Activated B cell treated with CpG ODN at 0.5 μM for 24 hours (primary cell): ENCODE measurements at regions of chr2 and their contacts with region 1.

Region 1: DNA sequence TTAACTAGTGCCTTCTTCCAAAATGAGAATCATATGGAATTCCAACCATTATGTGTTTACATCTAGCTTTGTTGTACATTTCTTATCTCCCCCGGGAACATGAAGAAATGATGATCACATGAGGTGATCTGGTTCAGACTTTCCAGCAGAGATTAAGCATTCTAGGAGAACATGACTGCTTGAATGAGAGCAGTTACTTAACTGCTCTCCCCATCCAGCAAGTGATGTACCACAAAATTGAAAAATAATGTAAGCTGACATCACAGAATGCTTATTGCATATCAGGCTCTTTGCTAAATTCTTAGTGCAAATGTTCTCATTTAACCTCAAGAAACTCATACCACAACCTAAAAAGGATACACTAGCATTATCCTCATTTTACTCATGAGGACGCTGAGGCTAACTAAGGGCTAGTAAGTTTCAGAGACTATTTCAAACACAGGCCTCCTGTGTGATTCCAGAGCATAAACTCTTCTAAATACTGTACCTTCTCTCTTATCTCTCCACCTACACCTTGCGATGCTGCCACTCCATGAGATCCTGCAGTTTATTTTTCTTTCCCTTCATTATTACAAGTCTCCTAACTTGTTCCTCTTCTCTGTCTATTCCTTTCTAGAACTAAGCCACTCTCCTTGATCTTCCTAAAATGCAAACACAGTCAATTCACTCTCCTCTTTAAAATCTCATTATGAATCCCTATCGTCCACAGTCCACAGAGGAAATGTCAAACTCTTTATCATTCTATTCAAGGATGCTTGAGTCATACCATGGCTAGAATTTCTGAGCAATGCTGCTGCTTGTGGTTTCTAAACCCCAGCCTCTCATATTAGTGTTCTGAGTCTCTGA is 1224.8 kb upstream of the ZEB2 start:
- DNase-seq: no peak
- ATAC-seq: peak; percentile 49
- H3K4me3 Mint-ChIP-seq: peak overlapping the region; percentile 50
- H3K27ac Mint-ChIP-seq: peak overlapping the region; percentile 84
- H3K4me1 Mint-ChIP-seq: peaks cover 88% of the 10 kb centered on the region
- H3K27me3 Mint-ChIP-seq: no peaks in the 10 kb centered on the region
- CTCF ChIP-seq: no peak

Region 2: GRCh38 chr2:145411493-145411892 is 333.3 kb before region 1 on chr2:
- CTCF ChIA-PET with region 1: no interaction called
- POLR2A ChIA-PET with region 1: no interaction called
- intact Hi-C with region 1: loop called (anchors 2 kb)
- DNase-seq: no peak
- ATAC-seq: peak; percentile 82
- H3K4me3 Mint-ChIP-seq: peak overlapping the region; percentile 74
- H3K27ac Mint-ChIP-seq: peak overlapping the region; percentile 65
- H3K4me1 Mint-ChIP-seq: peaks cover 35% of the 10 kb centered on the region
- H3K27me3 Mint-ChIP-seq: peaks cover 3% of the 10 kb centered on the region
- CTCF ChIP-seq: no peak

Region 3: DNA sequence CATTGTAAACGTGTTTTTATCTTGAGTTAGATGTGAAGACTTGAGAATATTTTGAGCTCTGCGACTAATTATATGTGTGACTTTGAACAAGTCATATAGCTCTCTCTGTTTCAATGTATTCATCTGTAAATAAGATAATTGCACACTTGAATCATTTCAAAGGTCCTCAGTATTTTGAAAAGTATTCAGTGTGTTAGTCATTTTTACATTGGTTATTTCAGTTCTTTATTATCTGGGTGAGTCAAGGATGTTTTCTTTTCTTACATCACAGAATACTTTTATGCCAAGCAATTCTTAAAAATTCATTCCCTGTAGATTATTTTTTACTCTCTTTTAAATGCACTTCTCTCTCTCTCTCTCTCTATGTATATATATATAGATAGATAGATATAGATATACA is 126.9 kb before region 1 on chr2:
- CTCF ChIA-PET with region 1: no interaction called
- POLR2A ChIA-PET with region 1: interaction called, 12 read pairs
- intact Hi-C with region 1: no loop called
- DNase-seq: no peak
- ATAC-seq: no peak
- H3K4me3 Mint-ChIP-seq: no peak overlapping the region
- H3K27ac Mint-ChIP-seq: no peak overlapping the region
- H3K4me1 Mint-ChIP-seq: no peaks in the 10 kb centered on the region
- H3K27me3 Mint-ChIP-seq: no peaks in the 10 kb centered on the region
- CTCF ChIP-seq: no peak

Region 4: GRCh38 chr2:145687442-145688134 is 57.2 kb before region 1 on chr2:
- CTCF ChIA-PET with region 1: interaction called, 8 read pairs
- POLR2A ChIA-PET with region 1: interaction called, 29 read pairs
- intact Hi-C with region 1: loop called (anchors 1 kb)
- DNase-seq: no peak
- ATAC-seq: peak; percentile 56
- H3K4me3 Mint-ChIP-seq: peak overlapping the region; percentile 46
- H3K27ac Mint-ChIP-seq: peak overlapping the region; percentile 85
- H3K4me1 Mint-ChIP-seq: peaks cover 46% of the 10 kb centered on the region
- H3K27me3 Mint-ChIP-seq: no peaks in the 10 kb centered on the region
- CTCF ChIP-seq: no peak

Region 5: DNA sequence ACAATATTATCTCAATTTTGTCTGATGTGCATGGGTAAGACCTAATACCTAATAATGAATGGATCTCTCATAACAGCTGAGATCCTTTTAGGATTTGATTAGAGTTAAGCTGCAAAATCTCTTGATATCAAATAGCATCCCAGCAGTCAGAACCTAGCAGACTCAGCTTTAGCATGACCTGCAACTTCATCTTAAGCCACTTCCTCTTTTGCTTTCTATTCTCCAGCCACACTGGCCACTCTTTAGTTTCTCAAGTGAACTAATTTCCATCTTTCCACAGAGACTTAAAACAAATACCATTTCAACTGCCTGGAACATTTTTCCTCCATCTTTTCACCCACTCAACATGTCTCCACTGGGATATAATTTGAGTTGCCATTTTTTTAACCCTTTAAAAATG is 26.8 kb after region 1 on chr2:
- CTCF ChIA-PET with region 1: no interaction called
- POLR2A ChIA-PET with region 1: interaction called, 15 read pairs
- intact Hi-C with region 1: no loop called
- DNase-seq: no peak
- ATAC-seq: peak; percentile 71
- H3K4me3 Mint-ChIP-seq: no peak overlapping the region
- H3K27ac Mint-ChIP-seq: peak overlapping the region; percentile 25
- H3K4me1 Mint-ChIP-seq: peaks cover 11% of the 10 kb centered on the region
- H3K27me3 Mint-ChIP-seq: no peaks in the 10 kb centered on the region
- CTCF ChIP-seq: no peak